Natural killer cell (primary cell): ENCODE measurements at regions of chr15 and their contacts with region 1.

Region 1: DNA sequence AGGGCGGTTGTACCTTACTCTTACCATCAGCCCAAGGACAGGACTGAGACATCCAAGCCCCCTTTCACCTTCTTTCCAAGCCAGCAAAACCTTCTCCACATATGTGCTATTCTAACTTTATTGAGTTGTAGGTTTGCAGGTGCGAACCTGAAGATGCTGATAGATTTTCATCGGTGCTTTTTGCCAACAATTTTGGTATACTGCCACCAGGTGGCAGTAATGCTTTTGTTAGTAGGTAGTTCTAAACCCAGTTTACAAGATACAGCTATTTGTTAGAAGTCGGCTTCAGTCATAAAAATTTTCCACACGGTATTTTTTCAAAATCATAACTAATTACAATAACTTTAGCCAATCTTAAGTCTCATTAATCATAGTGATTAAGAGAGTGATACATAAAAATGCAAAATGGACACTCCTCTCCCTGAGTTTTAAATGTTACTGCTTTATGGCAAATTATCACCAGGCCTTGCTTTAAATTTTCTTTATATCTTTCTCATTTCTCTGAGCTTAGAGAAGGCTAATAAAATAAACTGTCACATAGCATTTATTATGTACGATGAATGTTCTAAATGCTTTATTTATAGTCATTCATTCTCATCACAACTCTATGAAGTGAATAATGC is 636 bp downstream of the TBC1D21 start:
- DNase-seq: peak in 1 of 2 donors; percentile 76
- ATAC-seq: peak in 1 of 3 donors; percentile 54
- H3K4me3 ChIP-seq: no peak overlapping the region
- H3K4me3 Mint-ChIP-seq: no peak overlapping the region
- H3K27ac ChIP-seq: no peak overlapping the region
- H3K27ac Mint-ChIP-seq: no peak overlapping the region
- H3K4me1 ChIP-seq: no peaks in the 10 kb centered on the region
- H3K4me1 Mint-ChIP-seq: no peaks in the 10 kb centered on the region
- H3K27me3 ChIP-seq: peaks cover 6% of the 10 kb centered on the region
- H3K27me3 Mint-ChIP-seq: peaks cover 34 to 63% of the 10 kb centered on the region in 2 donors
- CTCF ChIP-seq: peak; percentile 76

Region 2: GRCh38 chr15:73908030-73908821 is 34.2 kb after region 1 on chr15:
- intact Hi-C with region 1: loop called (anchors 1 kb)
- DNase-seq: peak; percentile 66 to 83
- ATAC-seq: peak; percentile 91 to 99 (median 92)
- H3K4me3 ChIP-seq: no peak overlapping the region
- H3K4me3 Mint-ChIP-seq: no peak overlapping the region
- H3K27ac ChIP-seq: no peak overlapping the region
- H3K27ac Mint-ChIP-seq: no peak overlapping the region
- H3K4me1 ChIP-seq: no peaks in the 10 kb centered on the region
- H3K4me1 Mint-ChIP-seq: peaks cover 0 to 3% of the 10 kb centered on the region in 2 donors
- H3K27me3 ChIP-seq: no peaks in the 10 kb centered on the region
- H3K27me3 Mint-ChIP-seq: peaks cover 7 to 11% of the 10 kb centered on the region in 2 donors
- CTCF ChIP-seq: peak; percentile 80

Region 3: DNA sequence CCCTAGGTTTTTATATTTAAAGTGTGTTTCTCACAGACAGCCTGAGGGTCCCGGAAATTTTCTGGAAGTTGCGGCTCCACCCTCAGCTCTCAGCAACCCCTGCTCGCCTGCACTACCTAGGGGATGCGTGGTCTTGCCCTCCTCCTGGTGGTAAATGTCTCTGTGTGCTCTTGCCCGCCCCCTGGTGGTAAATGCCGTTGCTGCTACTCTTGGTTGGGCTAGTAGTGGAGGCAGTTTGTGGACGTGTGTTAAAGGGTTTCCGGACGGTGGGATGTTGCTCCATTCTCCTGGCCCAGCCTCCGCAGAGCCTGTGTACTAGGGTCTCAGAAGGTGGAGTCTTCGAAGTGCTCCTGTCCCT is 90.7 kb after region 1 on chr15:
- intact Hi-C with region 1: loop called (anchors 10 kb)
- DNase-seq: peak; percentile 81 to 93
- ATAC-seq: peak; percentile 95 to 98 (median 97)
- H3K4me3 ChIP-seq: no peak overlapping the region
- H3K4me3 Mint-ChIP-seq: peak overlapping the region; percentile 8
- H3K27ac ChIP-seq: no peak overlapping the region
- H3K27ac Mint-ChIP-seq: no peak overlapping the region
- H3K4me1 ChIP-seq: peaks cover 20% of the 10 kb centered on the region
- H3K4me1 Mint-ChIP-seq: peaks cover 20 to 27% of the 10 kb centered on the region in 2 donors
- H3K27me3 ChIP-seq: no peaks in the 10 kb centered on the region
- H3K27me3 Mint-ChIP-seq: peaks cover 3 to 7% of the 10 kb centered on the region in 2 donors
- CTCF ChIP-seq: peak; percentile 93